Activated CD4-positive, alpha-beta memory T cell treated with anti-CD3 and anti-CD28 coated beads for 36 hours (primary cell): ENCODE measurements at regions of chr18 and their contacts with region 1.

Region 1: GRCh38 chr18:2337552-2338141 is 233.7 kb downstream of the METTL4 start:
- DNase-seq: peak; percentile 61
- H3K4me3 Mint-ChIP-seq: no peak overlapping the region
- H3K27ac Mint-ChIP-seq: no peak overlapping the region
- H3K4me1 Mint-ChIP-seq: no peaks in the 10 kb centered on the region
- H3K27me3 Mint-ChIP-seq: peaks cover 14% of the 10 kb centered on the region

Region 2: DNA sequence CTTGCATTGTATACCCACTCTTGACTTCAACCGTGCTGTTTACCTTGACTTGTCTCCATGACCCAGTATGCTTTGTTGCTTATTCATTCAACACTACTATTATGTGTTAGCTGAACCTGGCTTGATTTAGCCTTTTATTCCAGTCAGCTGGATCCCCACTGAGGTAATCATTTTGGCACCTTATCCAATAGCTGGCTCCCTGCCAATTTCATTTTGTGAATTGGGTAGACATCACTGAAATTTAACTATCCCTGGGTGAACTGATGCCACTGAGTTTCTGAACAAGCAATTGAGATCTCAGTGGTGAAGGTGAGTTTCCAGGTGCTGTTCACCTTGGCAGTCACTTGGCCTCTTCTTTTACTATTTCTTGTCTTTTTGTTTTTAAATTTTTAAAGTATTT is 848.7 kb before region 1 on chr18:
- CTCF ChIA-PET with region 1: no interaction called
- POLR2A ChIA-PET with region 1: no interaction called
- intact Hi-C with region 1: no loop called
- DNase-seq: no peak
- H3K4me3 Mint-ChIP-seq: no peak overlapping the region
- H3K27ac Mint-ChIP-seq: no peak overlapping the region
- H3K4me1 Mint-ChIP-seq: no peaks in the 10 kb centered on the region
- H3K27me3 Mint-ChIP-seq: no peaks in the 10 kb centered on the region

Region 3: DNA sequence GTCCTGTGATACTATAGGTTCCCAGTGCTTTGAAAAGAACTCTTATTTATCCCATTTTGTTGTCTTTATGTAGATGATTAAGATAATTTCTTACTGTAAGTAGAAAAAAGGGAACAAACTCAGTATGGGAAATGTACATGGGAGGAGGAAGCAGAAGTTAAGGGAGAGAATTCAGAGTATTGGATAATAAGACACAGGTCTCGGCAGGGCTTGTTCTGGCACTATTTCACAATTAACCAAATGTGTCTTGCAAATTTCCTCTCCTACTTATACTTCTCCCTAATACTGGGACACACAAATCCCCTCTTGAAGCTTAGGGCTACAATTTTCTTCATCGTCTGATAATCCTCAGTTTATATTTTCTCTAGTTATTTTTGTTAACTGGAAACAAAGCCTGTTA is 688.9 kb before region 1 on chr18:
- CTCF ChIA-PET with region 1: no interaction called
- POLR2A ChIA-PET with region 1: no interaction called
- intact Hi-C with region 1: no loop called
- DNase-seq: no peak
- H3K4me3 Mint-ChIP-seq: no peak overlapping the region
- H3K27ac Mint-ChIP-seq: no peak overlapping the region
- H3K4me1 Mint-ChIP-seq: no peaks in the 10 kb centered on the region
- H3K27me3 Mint-ChIP-seq: no peaks in the 10 kb centered on the region

Region 4: DNA sequence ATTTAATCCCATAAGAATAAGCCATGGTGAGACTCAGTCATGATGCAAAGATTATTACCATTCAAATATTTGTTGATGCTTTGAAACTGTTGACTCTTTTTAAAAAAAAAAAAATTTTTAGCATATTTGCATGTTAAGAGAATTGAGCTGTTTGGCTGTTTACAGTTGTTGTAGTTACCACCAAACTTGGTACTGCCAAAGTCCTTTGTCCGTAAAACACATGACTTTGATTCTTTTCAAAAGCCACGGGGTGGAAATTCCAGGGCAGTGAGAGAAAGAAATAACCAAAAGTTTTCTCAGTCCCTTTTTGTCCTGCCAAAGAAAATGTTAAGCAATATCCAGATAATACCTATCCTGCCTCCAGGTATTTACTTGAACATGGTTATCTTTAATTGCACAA is 241.1 kb before region 1 on chr18:
- CTCF ChIA-PET with region 1: no interaction called
- POLR2A ChIA-PET with region 1: no interaction called
- intact Hi-C with region 1: no loop called
- DNase-seq: no peak
- H3K4me3 Mint-ChIP-seq: no peak overlapping the region
- H3K27ac Mint-ChIP-seq: no peak overlapping the region
- H3K4me1 Mint-ChIP-seq: no peaks in the 10 kb centered on the region
- H3K27me3 Mint-ChIP-seq: no peaks in the 10 kb centered on the region

Region 5: DNA sequence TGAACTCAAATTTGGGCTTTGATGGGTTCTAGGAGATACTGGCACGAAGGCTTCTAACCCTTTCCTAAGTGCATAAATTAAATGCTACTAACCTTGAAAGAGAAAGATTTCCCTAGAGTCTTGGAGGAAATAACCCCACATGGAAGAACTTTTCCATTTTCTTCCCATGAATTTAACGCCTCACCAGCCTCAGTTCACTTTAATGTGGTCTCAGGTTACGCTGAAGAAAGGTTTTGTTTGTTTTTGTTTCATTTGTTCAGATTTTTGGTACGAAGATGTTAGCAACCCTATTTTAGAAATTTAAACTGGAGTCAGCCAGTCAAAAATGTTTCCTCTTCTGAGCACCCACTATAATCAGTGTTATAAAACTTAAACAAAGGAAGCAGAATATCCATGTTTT is 202.9 kb after region 1 on chr18:
- CTCF ChIA-PET with region 1: interaction called, 31 read pairs
- POLR2A ChIA-PET with region 1: no interaction called
- intact Hi-C with region 1: loop called (anchors 1 kb)
- DNase-seq: no peak
- H3K4me3 Mint-ChIP-seq: no peak overlapping the region
- H3K27ac Mint-ChIP-seq: no peak overlapping the region
- H3K4me1 Mint-ChIP-seq: peaks cover 2% of the 10 kb centered on the region
- H3K27me3 Mint-ChIP-seq: no peaks in the 10 kb centered on the region

Region 6: GRCh38 chr18:2547477-2548087 is 209.9 kb after region 1 on chr18:
- CTCF ChIA-PET with region 1: interaction called, 7 read pairs
- POLR2A ChIA-PET with region 1: no interaction called
- intact Hi-C with region 1: loop called (anchors 1 kb)
- DNase-seq: no peak
- H3K4me3 Mint-ChIP-seq: no peak overlapping the region
- H3K27ac Mint-ChIP-seq: no peak overlapping the region
- H3K4me1 Mint-ChIP-seq: peaks cover 7% of the 10 kb centered on the region
- H3K27me3 Mint-ChIP-seq: no peaks in the 10 kb centered on the region